ENCODE measurements at regions of chr17 and their contacts with region 1.

Region 1: GRCh38 chr17:64020056-64020766 is at the start of gene ICAM2:
- DNase-seq: peak; percentile 76 to 97 (median 94)
- ATAC-seq: peak; percentile 75 to 77
- H3K4me3 Mint-ChIP-seq: peak within 1 kb of the TSS; percentile 94 to 100 (median 100)
- H3K27ac Mint-ChIP-seq: peak within 1 kb of the TSS; percentile 94 to 100 (median 100)
- H3K4me1 Mint-ChIP-seq: peaks cover 27 to 88% (median 73%) of the 10 kb centered on the region in 4 donors
- H3K27me3 Mint-ChIP-seq: peaks cover 0 to 3% (median 0%) of the 10 kb centered on the region in 5 donors
- polyA plus RNA-seq, gene ICAM2: 218 to 306 (median 289) TPM

Region 2: DNA sequence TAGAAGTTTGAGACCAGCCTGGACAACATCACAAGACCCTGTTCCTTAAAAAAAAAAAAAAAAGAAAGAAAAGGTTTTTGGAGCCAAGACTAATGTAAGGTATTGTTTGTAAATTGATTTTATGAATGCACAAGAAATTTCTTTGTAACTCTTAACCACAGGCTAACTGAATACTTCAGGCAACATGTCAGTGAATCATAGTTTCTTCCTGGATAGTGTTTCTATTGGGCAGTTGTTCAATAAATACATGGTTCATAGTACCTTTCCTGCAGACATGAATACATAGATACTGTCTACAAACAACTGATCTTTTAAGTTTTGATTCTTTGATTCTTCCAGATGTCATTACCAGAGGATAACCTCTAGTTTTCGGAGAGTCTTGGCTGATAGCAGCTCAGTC is 234.7 kb before region 1 on chr17:
- POLR2A ChIA-PET with region 1: no interaction called
- DNase-seq: no peak
- ATAC-seq: no peak
- H3K4me3 Mint-ChIP-seq: no peak overlapping the region
- H3K27ac Mint-ChIP-seq: peak overlapping the region in 3 of 10 donors; percentile 17 to 66 (median 44)
- H3K4me1 Mint-ChIP-seq: peaks cover 18 to 49% (median 40%) of the 10 kb centered on the region in 4 donors
- H3K27me3 Mint-ChIP-seq: no peaks in the 10 kb centered on the region

Region 3: GRCh38 chr17:63919311-63919723 is 100.9 kb before region 1 on chr17:
- POLR2A ChIA-PET with region 1: interaction called, 23 read pairs
- DNase-seq: peak; percentile 48 to 83 (median 74)
- ATAC-seq: peak; percentile 92 to 96
- H3K4me3 Mint-ChIP-seq: peak overlapping the region in 1 of 10 donors; percentile 66
- H3K27ac Mint-ChIP-seq: peak overlapping the region in 7 of 10 donors; percentile 12 to 87 (median 43)
- H3K4me1 Mint-ChIP-seq: peaks cover 4 to 48% (median 9%) of the 10 kb centered on the region in 4 donors
- H3K27me3 Mint-ChIP-seq: peaks cover 0 to 5% (median 0%) of the 10 kb centered on the region in 5 donors

Region 4: GRCh38 chr17:63946440-63947367 is 73.5 kb before region 1 on chr17:
- POLR2A ChIA-PET with region 1: interaction called, 14 read pairs
- DNase-seq: peak; percentile 16 to 72 (median 51)
- ATAC-seq: peak; percentile 86 to 88
- H3K4me3 Mint-ChIP-seq: peak overlapping the region; percentile 61 to 82 (median 74)
- H3K27ac Mint-ChIP-seq: peak overlapping the region in 6 of 10 donors; percentile 9 to 82 (median 64)
- H3K4me1 Mint-ChIP-seq: peaks cover 14 to 31% (median 23%) of the 10 kb centered on the region in 4 donors
- H3K27me3 Mint-ChIP-seq: peaks cover 0 to 1% (median 0%) of the 10 kb centered on the region in 5 donors

Region 5: DNA sequence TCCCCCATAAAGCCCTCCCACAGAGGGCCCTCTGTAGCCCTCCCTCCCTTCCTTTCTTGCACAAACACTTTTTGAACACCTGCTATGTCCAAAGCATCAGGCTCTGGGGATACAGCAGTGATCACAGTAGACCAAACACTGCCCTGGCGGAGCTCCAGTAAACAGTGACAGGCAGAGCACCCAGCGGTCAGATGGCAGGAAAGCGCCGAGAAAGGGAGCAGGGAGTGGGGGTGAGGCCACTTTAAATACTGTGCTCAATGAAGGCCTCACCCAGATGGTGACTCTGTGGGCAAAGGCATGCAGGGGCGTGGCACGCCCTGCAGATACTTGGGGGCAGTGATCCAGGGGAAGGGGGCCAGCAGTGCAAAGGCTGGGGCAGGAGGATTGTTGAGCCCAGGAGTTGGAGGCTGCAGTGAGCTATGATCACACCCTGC is 14.5 kb before region 1 on chr17:
- POLR2A ChIA-PET with region 1: interaction called, 150 read pairs
- DNase-seq: peak in 1 of 10 donors; percentile 1
- ATAC-seq: no peak
- H3K4me3 Mint-ChIP-seq: peak overlapping the region in 1 of 10 donors; percentile 38
- H3K27ac Mint-ChIP-seq: peak overlapping the region in 9 of 10 donors; percentile 53 to 91 (median 82)
- H3K4me1 Mint-ChIP-seq: peaks cover 20 to 55% (median 50%) of the 10 kb centered on the region in 4 donors
- H3K27me3 Mint-ChIP-seq: no peaks in the 10 kb centered on the region

Region 6: DNA sequence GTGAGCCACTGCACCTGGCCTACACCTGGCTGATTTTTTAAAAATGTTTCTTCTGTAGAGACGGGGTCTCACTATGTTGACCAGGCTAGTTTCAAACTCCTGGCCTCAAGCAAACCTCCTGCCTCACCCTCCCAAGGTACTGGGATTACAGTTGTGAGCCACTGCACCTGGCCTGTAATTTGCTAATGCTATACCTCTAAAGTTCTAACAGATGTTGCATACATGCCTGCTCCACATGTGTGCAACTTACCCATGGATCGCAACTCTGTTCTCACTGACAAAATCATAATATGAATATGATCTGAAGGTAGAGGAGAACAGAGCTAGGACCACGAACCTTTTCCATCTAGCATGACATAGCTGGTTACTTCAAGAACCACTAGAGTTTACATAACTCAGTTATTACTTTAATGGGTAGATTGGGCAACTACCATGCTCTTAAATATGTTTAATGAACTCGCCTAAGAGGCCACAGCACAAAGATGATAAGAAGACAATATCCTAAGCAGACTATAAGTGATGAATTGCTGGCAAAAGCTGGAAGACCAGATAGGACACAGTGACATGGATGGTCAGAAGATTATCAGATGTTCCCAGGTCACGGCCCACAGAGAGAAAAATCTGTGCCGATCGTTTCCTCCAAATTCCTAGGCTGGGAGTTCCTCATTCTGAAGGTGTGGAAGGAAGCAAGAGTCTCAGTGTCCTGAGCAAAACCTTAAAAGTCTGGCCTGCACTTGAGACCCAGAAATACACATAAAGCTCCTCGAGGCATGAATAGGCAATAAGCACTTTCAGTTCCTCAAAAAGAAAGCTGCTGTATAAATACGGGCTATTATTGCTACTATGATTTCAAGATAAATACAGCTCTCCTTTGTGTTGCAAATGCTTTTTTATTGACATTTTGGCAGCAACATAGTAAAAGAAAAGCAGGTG is 53.8 kb after region 1 on chr17:
- POLR2A ChIA-PET with region 1: no interaction called
- DNase-seq: no peak
- ATAC-seq: no peak
- H3K4me3 Mint-ChIP-seq: no peak overlapping the region
- H3K27ac Mint-ChIP-seq: peak overlapping the region in 1 of 10 donors; percentile 68
- H3K4me1 Mint-ChIP-seq: peaks cover 0 to 39% (median 3%) of the 10 kb centered on the region in 4 donors
- H3K27me3 Mint-ChIP-seq: no peaks in the 10 kb centered on the region

Region 7: GRCh38 chr17:64129764-64130558 is 109.8 kb after region 1 on chr17 and contains the start of gene ERN1:
- POLR2A ChIA-PET with region 1: interaction called, 87 read pairs
- DNase-seq: peak; percentile 83 to 95 (median 92)
- ATAC-seq: peak; percentile 87 to 89
- H3K4me3 Mint-ChIP-seq: peak within 1 kb of the TSS; percentile 83 to 95 (median 92)
- H3K27ac Mint-ChIP-seq: peak within 1 kb of the TSS; percentile 82 to 97 (median 96)
- H3K4me1 Mint-ChIP-seq: peaks cover 11 to 54% (median 37%) of the 10 kb centered on the region in 4 donors
- H3K27me3 Mint-ChIP-seq: no peaks in the 10 kb centered on the region
- polyA plus RNA-seq, gene ERN1: 9.3 to 21.2 (median 11.5) TPM

Region 8: DNA sequence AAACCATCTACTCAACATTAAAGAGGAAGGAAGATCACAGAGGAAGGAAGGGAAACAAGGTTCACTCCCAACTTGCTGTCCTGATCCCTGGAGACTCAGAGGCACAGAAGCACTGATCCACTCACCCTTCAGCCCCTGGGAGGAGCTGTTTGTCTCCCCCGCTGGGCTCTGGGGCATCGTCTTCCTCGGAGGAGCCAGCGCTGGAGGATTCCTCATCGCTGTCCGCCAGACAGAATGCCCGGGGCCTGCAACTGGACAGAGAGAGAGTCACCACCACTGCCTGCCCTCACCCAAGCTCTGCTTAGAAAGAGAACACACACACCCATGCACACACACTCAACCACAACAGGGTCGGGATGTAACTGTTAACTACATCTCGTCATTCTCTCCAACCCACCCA is 134.5 kb after region 1 on chr17:
- POLR2A ChIA-PET with region 1: no interaction called
- DNase-seq: no peak
- ATAC-seq: no peak
- H3K4me3 Mint-ChIP-seq: no peak overlapping the region
- H3K27ac Mint-ChIP-seq: peak overlapping the region in 2 of 10 donors; percentile 27 to 38
- H3K4me1 Mint-ChIP-seq: peaks cover 0 to 2% (median 0%) of the 10 kb centered on the region in 4 donors
- H3K27me3 Mint-ChIP-seq: no peaks in the 10 kb centered on the region

Region 9: DNA sequence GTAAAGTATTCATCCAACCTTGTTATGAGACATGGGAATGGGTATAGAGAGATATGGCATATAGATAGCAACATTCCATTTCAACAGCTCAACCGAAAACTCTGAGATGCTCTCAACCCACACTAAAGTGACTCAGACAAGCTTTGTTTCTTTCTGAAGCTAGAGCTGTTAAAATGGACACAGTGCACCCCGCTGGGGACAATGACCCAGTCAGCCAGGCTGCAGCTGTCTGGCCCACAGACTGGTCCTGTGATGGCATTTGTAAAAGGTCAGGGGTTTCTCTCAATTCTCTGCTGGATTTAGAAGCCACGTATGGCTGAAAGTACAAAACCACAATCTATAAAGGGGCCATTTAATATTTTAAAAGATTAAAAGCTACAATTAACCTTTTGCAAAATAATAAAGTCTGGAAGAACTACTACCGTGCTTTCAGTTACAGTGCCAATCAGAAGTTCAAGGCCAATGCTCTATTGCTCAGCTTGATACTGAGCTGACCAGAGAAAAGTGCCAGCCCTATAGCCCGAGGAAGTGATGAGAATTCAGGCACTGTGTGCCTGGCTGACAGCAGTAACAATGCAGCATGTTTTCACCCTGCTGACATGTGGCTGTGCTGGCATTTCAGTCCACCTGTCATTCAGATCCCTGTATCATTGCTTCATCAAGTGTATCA is 182.6 kb after region 1 on chr17:
- POLR2A ChIA-PET with region 1: no interaction called
- DNase-seq: no peak
- ATAC-seq: no peak
- H3K4me3 Mint-ChIP-seq: no peak overlapping the region
- H3K27ac Mint-ChIP-seq: peak overlapping the region in 1 of 10 donors; percentile 15
- H3K4me1 Mint-ChIP-seq: peaks cover 19 to 46% (median 25%) of the 10 kb centered on the region in 4 donors
- H3K27me3 Mint-ChIP-seq: no peaks in the 10 kb centered on the region